Body of pancreas (tissue), 4 donors: ENCODE measurements at regions of chr10 and their contacts with region 1.

Region 1: GRCh38 chr10:9211228-9211627 is 1156.7 kb downstream of the GATA3 start:
- DNase-seq: no peak
- ATAC-seq: no peak
- H3K4me3 ChIP-seq: no peak overlapping the region
- H3K27ac ChIP-seq: no peak overlapping the region
- H3K4me1 ChIP-seq: no peaks in the 10 kb centered on the region
- H3K27me3 ChIP-seq: peaks cover 0 to 10% of the 10 kb centered on the region in 2 donors
- CTCF ChIP-seq: no peak
- POLR2A ChIP-seq: no peak

Region 2: DNA sequence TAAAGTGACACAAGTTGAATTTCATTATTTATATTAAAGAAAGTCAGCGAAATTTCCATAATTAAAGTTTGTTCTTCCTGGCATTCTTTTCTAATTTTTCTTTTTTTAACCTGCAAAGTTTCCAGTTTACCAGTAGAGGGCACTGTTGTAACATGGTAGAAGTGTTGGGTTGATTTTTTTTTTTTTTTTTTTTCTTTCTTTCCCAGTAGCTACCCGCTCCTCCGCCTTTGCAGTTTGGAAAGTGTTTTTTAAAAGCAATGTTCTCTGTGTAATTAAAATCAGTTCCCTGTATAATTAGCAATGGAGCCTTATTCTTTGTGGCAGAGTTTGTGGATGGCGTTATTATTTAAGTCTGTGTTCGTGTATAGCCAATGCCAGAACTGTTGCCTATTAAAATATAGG is 1339.2 kb before region 1 on chr10:
- intact Hi-C with region 1: loop called (anchors 10 kb)
- DNase-seq: no peak
- ATAC-seq: no peak
- H3K4me3 ChIP-seq: no peak overlapping the region
- H3K27ac ChIP-seq: no peak overlapping the region
- H3K4me1 ChIP-seq: peaks cover 23% of the 10 kb centered on the region
- H3K27me3 ChIP-seq: no peaks in the 10 kb centered on the region
- CTCF ChIP-seq: peak; percentile 49 to 97 (median 72)
- POLR2A ChIP-seq: no peak

Region 3: DNA sequence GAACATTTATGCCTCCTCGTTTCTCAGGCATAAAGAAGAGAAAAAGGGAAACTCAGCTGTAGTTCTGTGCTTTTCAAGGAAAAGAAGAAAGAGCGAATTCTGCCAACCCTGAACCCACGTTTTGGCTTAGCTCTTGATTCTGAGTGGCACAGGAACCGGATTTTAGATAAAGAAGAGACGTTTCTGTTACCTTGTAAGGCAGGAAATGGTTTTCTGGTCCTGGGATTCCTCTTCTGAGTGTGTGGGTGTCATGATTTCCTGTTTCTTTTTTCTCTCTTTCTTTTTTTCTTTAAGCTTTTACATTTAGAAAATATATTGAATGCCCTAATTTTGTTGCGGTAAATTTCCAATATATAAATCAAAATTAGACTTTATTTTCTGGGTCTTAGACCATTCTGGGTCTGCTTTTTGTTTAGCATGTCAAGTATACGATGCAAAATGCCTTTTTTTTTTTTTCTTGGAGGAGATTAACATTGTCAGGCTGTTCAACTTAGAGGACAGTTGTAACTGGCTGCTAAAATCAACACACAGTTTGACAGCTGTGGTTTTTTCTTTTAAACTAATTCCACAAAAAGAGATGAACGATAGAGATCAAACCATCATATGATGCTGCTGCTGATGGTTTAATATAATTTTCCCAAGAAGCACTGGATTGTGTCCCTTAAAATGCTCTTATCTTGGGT is 966.0 kb before region 1 on chr10:
- intact Hi-C with region 1: no loop called
- DNase-seq: no peak
- ATAC-seq: no peak
- H3K4me3 ChIP-seq: no peak overlapping the region
- H3K27ac ChIP-seq: no peak overlapping the region
- H3K4me1 ChIP-seq: no peaks in the 10 kb centered on the region
- H3K27me3 ChIP-seq: no peaks in the 10 kb centered on the region
- CTCF ChIP-seq: no peak
- POLR2A ChIP-seq: no peak